ENCODE measurements at regions of chr5 and their contacts with region 1.

Region 1: GRCh38 chr5:112921833-112922817 is at the start of gene REEP5:
- DNase-seq: peak; percentile 86 to 94 (median 90)
- ATAC-seq: peak; percentile 78 to 96 (median 94)
- H3K4me3 ChIP-seq: peak within 1 kb of the TSS; percentile 81 to 99 (median 91)
- H3K27ac ChIP-seq: peak within 1 kb of the TSS; percentile 88 to 100 (median 98)
- H3K4me1 ChIP-seq: peaks cover 7 to 56% (median 41%) of the 10 kb centered on the region in 12 donors
- H3K27me3 ChIP-seq: no peaks in the 10 kb centered on the region
- CTCF ChIP-seq: peak; percentile 55 to 95 (median 86)
- POLR2A ChIP-seq: peak; percentile 67 to 85
- total RNA-seq, gene REEP5: 103 to 187 (median 141) TPM

Region 2: DNA sequence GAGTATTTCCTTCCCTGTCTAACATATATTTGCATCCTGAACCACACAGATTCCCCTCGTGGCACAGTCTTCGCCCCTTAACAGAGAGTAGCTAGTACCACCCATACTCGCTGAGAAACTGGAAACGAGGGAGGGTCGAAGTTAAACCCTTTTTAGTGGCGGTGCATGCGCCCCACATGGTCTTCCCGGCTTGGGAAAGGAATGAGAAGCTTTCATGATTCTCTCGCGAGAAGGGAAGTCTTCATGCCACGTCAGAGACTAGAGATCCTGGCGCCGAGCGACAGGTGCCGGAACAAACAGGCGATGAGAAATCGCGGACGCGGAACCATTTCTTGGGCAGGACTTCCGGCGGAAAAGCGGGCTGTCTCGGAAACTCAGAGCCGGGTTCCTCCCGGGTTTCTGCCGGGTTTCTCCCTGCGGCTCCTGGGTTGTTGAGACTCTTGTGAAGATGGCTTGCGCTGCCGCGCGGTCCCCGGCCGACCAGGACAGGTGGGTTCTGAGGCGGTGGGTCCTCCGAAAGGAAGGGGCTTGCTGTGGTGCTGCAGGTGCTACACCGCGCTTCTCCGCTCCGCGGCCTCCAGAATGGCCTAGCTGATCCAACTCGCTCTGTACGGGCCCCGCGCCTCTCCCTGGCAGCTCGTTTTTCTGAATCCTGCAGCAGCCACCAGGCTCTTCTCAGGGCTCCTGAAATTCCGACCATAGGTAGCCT is 61.0 kb before region 1 on chr5 and contains the start of gene SRP19:
- intact Hi-C with region 1: loop called in 8 of 10 experiments (anchors 2 to 10 kb)
- DNase-seq: peak; percentile 95 to 97 (median 96)
- ATAC-seq: peak; percentile 95 to 98 (median 96)
- H3K4me3 ChIP-seq: peak within 1 kb of the TSS; percentile 71 to 98 (median 84)
- H3K27ac ChIP-seq: peak within 1 kb of the TSS; percentile 63 to 89 (median 82)
- H3K4me1 ChIP-seq: peaks cover 0 to 35% (median 26%) of the 10 kb centered on the region in 12 donors
- H3K27me3 ChIP-seq: no peaks in the 10 kb centered on the region
- CTCF ChIP-seq: no peak
- POLR2A ChIP-seq: peak in 1 of 2 donors; percentile 78
- total RNA-seq, gene SRP19: 23.6 to 45.7 (median 28.2) TPM

Region 3: GRCh38 chr5:112948455-112948854 is 26.3 kb after region 1 on chr5:
- intact Hi-C with region 1: loop called in 1 of 10 experiments (anchors 2 kb)
- DNase-seq: no peak
- ATAC-seq: no peak
- H3K4me3 ChIP-seq: no peak overlapping the region
- H3K27ac ChIP-seq: no peak overlapping the region
- H3K4me1 ChIP-seq: no peaks in the 10 kb centered on the region
- H3K27me3 ChIP-seq: no peaks in the 10 kb centered on the region
- CTCF ChIP-seq: no peak
- POLR2A ChIP-seq: no peak

Region 4: DNA sequence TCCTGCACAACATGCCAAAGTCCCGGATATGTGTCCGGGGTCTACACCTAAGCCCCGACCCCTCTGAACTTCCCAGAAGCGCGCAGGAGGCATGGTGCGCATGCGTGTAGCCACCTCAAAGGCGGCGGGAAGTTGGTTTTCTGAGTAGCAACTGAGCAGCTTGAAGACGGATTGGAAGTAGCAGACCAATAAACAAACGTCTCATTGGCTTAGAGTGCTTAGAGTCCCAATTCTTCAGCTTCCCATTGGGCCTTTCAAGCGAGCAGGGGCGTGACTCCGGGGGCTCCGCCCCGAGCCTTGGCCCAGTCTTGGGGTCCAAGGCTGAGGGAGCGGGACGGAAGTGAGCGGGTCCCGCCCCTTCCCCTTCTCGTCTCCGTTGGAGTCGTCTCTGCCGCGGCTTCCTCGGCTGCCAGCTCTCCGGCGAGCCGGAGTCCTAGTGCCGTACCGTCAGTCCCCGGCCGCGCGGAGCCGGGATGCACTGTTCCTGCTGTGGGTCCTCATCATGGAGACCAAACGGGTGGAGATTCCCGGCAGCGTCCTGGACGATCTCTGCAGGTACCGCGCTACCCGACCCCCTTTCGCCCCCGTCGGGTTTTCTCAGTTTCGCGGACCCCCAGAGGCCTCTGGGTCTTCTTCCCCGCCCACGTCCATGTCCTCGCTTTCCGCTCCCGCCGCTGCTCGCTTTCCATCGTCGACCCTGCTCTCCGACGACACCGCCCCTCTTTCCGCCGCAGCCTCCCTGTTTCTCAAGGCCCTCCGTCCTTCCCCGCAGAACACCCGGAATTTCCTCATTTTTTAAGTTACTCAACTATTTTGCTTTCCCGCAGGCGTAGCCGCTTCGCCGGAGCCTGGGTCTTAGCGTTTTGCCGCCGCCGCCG is 54.5 kb after region 1 on chr5 and contains the start of gene DCP2:
- intact Hi-C with region 1: loop called in 5 of 10 experiments (anchors 2 to 10 kb)
- DNase-seq: peak; percentile 95 to 97 (median 96)
- ATAC-seq: peak; percentile 99
- H3K4me3 ChIP-seq: peak within 1 kb of the TSS; percentile 36 to 95 (median 90)
- H3K27ac ChIP-seq: peak within 1 kb of the TSS; percentile 82 to 95 (median 92)
- H3K4me1 ChIP-seq: peaks cover 0 to 42% (median 31%) of the 10 kb centered on the region in 12 donors
- H3K27me3 ChIP-seq: no peaks in the 10 kb centered on the region
- CTCF ChIP-seq: no peak
- POLR2A ChIP-seq: peak in 1 of 2 donors; percentile 77
- total RNA-seq, gene DCP2: 8.3 to 36.0 (median 18.4) TPM

Region 5: DNA sequence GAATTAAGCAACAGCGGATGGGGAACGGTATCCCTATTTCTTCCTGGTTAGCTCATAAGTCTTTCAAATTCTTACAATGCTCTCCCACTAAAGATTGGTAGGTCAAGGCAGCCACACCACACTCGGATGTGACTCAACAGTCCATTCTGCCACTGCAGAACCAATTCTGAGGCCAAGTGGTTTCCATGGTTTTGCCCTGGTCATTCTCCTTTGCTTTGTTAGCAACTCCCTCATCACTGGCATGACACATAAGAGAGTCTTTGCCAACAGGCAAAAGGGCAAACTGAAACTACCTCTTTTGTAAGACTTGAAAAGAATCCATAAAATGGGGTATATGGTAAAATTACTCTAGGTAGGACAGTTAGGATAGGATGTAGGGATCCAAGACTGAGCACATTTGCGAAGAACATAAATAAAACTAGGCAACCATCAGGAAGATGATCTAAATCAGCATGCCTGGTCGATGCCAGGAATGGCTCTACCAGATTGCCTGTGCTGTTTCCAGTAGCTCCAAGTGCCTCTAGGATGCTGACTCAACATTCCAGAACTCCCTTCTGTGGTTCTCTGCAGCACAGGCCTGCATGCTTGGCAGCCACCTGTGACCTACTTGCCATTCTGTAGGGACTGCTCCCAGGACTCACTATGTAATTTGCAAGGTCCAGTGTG is 159.9 kb after region 1 on chr5:
- intact Hi-C with region 1: no loop called
- DNase-seq: no peak
- ATAC-seq: peak in 2 of 4 donors; percentile 37 to 50
- H3K4me3 ChIP-seq: no peak overlapping the region
- H3K27ac ChIP-seq: no peak overlapping the region
- H3K4me1 ChIP-seq: peaks cover 0 to 43% (median 20%) of the 10 kb centered on the region in 12 donors
- H3K27me3 ChIP-seq: no peaks in the 10 kb centered on the region
- CTCF ChIP-seq: no peak
- POLR2A ChIP-seq: no peak

Measured in heart left ventricle (tissue), 16 donors.